Dendritic cell treated with granulocyte-macrophage colony-stimulating factor and Interleukin-4, amounts not matched to agents 40 ng/mL and 50 ng/mL, for 4 days (primary cell): ENCODE measurements at regions of chr1 and their contacts with region 1.

Region 1: DNA sequence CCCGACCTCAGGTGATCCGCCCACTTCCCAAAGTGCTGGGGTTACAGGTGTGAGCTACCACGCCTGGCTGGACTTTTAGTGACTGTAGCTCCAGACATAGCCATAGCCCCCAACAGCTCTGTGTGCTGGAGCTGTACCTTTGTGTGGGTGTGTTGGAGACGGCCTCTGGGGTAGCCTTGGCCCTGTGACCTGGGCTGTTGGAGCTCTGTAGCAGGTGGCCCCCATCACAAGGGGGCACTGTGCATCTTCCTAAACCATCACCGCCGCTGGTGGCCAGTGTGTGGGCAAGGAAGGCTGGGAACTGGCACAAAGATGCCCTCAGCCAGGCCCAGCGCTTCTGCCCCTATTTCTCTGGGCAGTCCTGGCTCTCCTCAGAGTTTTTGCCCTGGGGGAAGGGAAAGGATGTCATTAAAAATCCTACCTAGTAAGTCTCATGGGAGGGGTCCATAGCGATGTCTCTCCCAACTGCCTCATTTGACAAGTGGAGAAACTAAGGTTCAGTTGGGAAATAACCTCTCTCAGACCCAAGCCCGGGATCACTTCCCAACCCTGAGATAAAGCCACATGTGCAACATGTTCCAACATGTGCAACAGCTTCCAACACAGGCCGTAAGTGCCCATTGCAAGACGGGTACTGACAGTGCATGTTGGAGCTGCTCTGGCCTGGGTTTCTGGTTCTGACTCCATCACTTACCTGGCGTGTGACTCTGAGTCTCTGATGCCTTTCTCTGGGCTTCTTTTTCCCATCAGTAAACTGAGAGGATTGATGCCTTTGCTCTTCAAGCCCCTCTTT is 38.2 kb upstream of the FOXO6 start:
- H3K4me3 Mint-ChIP-seq: no peak overlapping the region
- H3K27ac Mint-ChIP-seq: no peak overlapping the region
- H3K4me1 Mint-ChIP-seq: no peaks in the 10 kb centered on the region
- H3K27me3 Mint-ChIP-seq: no peaks in the 10 kb centered on the region

Region 2: DNA sequence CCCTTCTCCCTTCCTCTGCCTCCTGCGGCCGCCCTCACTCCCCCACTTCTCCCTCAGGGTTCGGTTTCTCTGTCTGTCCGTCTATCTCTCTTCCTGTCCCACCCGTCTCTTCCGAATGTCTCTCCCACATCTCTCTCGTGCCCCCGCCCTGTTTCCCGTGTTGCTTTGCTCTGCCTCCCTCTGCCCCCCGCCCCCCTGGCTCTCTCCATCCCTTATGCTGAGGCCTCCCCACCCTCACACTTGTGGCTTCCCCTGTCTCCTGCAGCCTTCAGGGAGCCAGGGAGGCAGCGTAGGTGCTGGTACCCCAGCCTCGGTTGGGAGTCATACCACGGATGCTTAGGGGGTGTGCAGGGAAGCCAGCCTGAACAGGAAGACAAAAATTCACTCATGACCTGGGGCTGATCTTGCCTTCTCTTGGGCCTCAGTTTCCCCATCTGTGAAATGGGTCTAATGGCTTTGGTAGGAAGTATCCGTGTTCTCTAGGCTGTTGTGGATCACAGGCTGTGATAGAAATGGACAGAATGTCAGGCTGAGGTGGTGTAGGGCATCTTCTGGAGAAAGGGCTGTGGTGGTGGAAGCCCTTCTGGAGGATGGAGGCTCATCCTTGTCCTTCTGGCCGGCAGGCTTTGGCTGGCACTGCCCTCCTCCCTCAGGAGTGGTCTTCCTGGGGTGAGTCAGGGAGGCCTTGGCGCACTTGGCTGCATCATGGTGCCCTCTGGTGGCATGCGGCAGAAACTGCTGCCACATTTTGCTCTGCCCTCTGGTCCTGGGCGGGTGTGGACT is 93.7 kb after region 1 on chr1:
- intact Hi-C with region 1: loop called (anchors 1 kb)
- H3K4me3 Mint-ChIP-seq: no peak overlapping the region
- H3K27ac Mint-ChIP-seq: no peak overlapping the region
- H3K4me1 Mint-ChIP-seq: peaks cover 11% of the 10 kb centered on the region
- H3K27me3 Mint-ChIP-seq: peaks cover 16% of the 10 kb centered on the region